B cell (primary cell): ENCODE measurements at regions of chr12 and their contacts with region 1.

Region 1: DNA sequence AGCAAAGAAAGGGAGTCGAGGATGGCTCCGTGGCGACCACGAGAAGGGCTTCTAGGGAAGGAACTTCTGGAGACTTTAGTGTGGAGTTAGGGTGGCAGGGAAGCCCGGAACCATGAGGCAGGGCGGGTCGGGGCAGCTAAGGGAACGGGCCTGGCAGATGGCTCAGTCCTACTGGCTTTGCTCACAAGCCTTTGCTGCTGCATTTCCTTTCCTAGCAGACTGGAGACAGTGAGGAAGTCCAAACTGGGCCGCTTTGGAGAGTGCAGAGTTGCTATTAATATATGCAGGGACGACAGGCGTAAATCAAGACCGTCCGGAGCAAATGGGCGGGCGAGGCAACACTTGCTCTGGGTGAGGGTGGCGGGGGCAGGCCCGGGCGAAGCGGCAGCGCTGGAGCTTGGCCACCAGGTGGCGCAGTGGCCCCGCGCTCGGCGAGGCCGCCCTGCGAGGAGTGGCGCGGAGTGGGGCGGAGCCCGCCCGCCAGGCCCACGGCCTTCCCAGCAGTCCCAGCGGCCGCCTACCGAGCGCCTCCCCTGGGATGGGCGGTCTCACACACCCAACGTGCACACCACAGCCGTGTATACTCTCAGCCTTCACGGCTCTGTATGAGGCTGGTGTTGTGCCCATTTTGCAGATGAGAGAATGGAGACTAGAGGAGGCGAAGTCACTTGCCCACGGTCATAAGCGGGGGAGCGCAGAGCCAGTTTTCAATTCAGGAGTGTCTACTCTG is 24.4 kb upstream of the LRTM2 start:
- DNase-seq: peak; percentile 95
- ATAC-seq: peak; percentile 92
- H3K4me3 ChIP-seq: peak overlapping the region; percentile 64 to 88 (median 67)
- H3K4me3 Mint-ChIP-seq: peak overlapping the region; percentile 98
- H3K27ac ChIP-seq: peak overlapping the region; percentile 67 to 83
- H3K27ac Mint-ChIP-seq: peak overlapping the region; percentile 97
- H3K4me1 ChIP-seq: peaks cover 14 to 37% of the 10 kb centered on the region in 2 donors
- H3K4me1 Mint-ChIP-seq: peaks cover 33% of the 10 kb centered on the region
- H3K27me3 ChIP-seq: no peaks in the 10 kb centered on the region
- H3K27me3 Mint-ChIP-seq: no peaks in the 10 kb centered on the region
- CTCF ChIP-seq: peak; percentile 90

Region 2: DNA sequence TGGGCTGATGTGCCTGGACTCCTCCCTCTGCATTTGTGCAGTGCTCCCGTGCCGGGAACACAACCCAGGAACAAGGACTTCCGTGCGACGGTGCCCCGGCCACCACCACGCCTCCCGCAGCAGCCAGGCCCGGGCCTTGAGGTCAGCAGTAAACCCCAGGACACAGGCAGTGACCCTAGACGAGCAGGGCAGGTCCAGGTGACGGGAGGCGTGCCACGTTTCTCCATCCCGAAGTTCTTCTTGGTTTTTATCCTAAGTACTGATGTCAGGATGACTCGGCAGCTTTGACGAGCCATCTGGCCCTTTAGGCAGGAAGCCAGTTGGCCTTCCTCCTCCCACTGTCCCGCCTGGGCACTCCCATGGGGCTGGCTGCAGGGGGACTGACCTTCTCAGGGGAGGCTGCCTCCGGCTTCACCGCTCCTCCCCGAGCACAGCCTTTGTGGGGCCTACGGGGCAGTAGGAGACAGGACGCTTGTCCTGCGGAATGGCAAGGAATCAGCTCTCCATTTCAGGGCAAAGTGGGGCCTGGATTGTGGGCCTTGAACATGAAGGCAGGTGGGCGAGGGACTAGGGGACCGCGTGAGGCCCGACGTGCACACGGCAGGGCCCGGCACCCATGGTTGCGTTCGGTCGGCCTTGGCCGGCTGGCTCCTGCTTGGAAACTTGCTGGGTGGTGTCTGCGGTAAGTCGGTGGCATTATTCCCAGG is 295.7 kb before region 1 on chr12:
- CTCF ChIA-PET with region 1: no interaction called
- POLR2A ChIA-PET with region 1: no interaction called
- intact Hi-C with region 1: no loop called
- DNase-seq: no peak
- ATAC-seq: no peak
- H3K4me3 ChIP-seq: no peak overlapping the region
- H3K4me3 Mint-ChIP-seq: no peak overlapping the region
- H3K27ac ChIP-seq: no peak overlapping the region
- H3K27ac Mint-ChIP-seq: no peak overlapping the region
- H3K4me1 ChIP-seq: peaks cover 0 to 4% of the 10 kb centered on the region in 2 donors
- H3K4me1 Mint-ChIP-seq: peaks cover 4% of the 10 kb centered on the region
- H3K27me3 ChIP-seq: peaks cover 0 to 3% (median 0%) of the 10 kb centered on the region in 4 experiments
- H3K27me3 Mint-ChIP-seq: peaks cover 26% of the 10 kb centered on the region
- CTCF ChIP-seq: no peak

Region 3: GRCh38 chr12:1594261-1595025 is 201.5 kb before region 1 on chr12 and contains the start of gene FBXL14:
- CTCF ChIA-PET with region 1: no interaction called
- POLR2A ChIA-PET with region 1: no interaction called
- intact Hi-C with region 1: no loop called
- DNase-seq: peak; percentile 95
- ATAC-seq: peak; percentile 65
- H3K4me3 ChIP-seq: peak within 1 kb of the TSS; percentile 59 to 81 (median 73)
- H3K4me3 Mint-ChIP-seq: peak within 1 kb of the TSS; percentile 94
- H3K27ac ChIP-seq: peak within 1 kb of the TSS; percentile 80 to 96
- H3K27ac Mint-ChIP-seq: peak within 1 kb of the TSS; percentile 97
- H3K4me1 ChIP-seq: peaks cover 38 to 41% of the 10 kb centered on the region in 2 donors
- H3K4me1 Mint-ChIP-seq: peaks cover 50% of the 10 kb centered on the region
- H3K27me3 ChIP-seq: no peaks in the 10 kb centered on the region
- H3K27me3 Mint-ChIP-seq: no peaks in the 10 kb centered on the region
- CTCF ChIP-seq: no peak
- total RNA-seq, gene FBXL14: 33.9 and 37.3 TPM in 2 replicates

Region 4: GRCh38 chr12:1644534-1645438 is 151.2 kb before region 1 on chr12:
- CTCF ChIA-PET with region 1: interaction called, 620 read pairs
- POLR2A ChIA-PET with region 1: no interaction called
- intact Hi-C with region 1: no loop called
- DNase-seq: no peak
- ATAC-seq: no peak
- H3K4me3 ChIP-seq: no peak overlapping the region
- H3K4me3 Mint-ChIP-seq: no peak overlapping the region
- H3K27ac ChIP-seq: no peak overlapping the region
- H3K27ac Mint-ChIP-seq: no peak overlapping the region
- H3K4me1 ChIP-seq: peaks cover 0 to 14% of the 10 kb centered on the region in 2 donors
- H3K4me1 Mint-ChIP-seq: peaks cover 11% of the 10 kb centered on the region
- H3K27me3 ChIP-seq: no peaks in the 10 kb centered on the region
- H3K27me3 Mint-ChIP-seq: peaks cover 27% of the 10 kb centered on the region
- CTCF ChIP-seq: no peak

Region 5: DNA sequence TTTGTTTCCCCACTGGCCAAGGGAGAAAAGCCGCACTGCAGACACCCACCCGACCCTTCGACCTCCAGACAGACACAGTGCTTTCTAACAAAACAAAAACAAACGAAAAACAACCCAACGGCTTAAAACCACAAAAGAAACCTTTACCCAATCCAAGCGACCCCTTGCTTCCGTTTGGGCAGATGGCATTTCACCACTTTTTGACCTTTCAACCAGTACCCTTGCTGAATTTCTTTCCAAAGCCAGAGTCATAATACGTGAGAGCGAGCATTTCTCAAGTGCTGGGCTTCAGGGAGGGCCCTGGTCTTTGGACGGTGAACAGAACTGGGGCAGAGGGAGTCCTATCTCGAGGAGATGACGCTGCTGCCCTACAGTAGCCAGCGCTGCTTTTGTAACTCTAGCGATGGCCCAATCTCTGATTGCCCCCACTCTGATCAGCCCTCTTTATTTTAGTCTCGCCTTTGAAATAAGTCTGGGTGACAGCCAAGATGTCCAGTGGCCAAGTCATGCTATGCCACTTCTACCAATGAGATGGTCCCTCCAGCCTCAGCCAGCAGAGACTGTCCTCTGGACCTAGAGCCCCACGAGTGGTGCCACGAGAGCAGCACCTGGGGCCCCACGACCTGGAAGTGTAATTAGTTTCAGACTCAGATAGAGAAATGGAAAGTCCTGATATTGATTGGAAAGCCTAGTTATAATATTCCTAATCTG is 127.0 kb before region 1 on chr12:
- CTCF ChIA-PET with region 1: interaction called, 15 read pairs
- POLR2A ChIA-PET with region 1: no interaction called
- intact Hi-C with region 1: no loop called
- DNase-seq: no peak
- ATAC-seq: no peak
- H3K4me3 ChIP-seq: no peak overlapping the region
- H3K4me3 Mint-ChIP-seq: peak overlapping the region; percentile 30
- H3K27ac ChIP-seq: no peak overlapping the region
- H3K27ac Mint-ChIP-seq: no peak overlapping the region
- H3K4me1 ChIP-seq: peaks cover 10 to 13% of the 10 kb centered on the region in 2 donors
- H3K4me1 Mint-ChIP-seq: peaks cover 18% of the 10 kb centered on the region
- H3K27me3 ChIP-seq: no peaks in the 10 kb centered on the region
- H3K27me3 Mint-ChIP-seq: no peaks in the 10 kb centered on the region
- CTCF ChIP-seq: no peak

Region 6: DNA sequence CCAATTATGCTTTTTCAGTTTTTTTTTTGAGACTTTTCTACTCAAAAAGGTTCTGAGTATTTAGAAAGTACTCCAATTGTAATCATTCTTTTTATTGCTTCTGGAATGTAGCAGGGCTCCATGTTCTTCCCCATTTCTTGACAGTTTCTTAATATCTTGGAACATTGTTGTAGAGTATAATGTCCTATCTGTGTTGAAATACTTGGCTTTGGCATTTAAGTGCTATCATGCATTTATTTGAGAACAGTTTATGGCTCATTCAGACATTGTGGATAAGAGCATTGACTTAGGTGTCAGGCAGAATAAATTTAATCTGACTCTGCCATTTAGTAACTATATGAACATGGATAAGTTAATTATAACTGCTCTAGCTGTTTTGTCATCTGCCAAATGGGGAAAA is 76.8 kb before region 1 on chr12:
- CTCF ChIA-PET with region 1: no interaction called
- POLR2A ChIA-PET with region 1: no interaction called
- intact Hi-C with region 1: no loop called
- DNase-seq: no peak
- ATAC-seq: no peak
- H3K4me3 ChIP-seq: no peak overlapping the region
- H3K4me3 Mint-ChIP-seq: no peak overlapping the region
- H3K27ac ChIP-seq: no peak overlapping the region
- H3K27ac Mint-ChIP-seq: no peak overlapping the region
- H3K4me1 ChIP-seq: peaks cover 3 to 10% of the 10 kb centered on the region in 2 donors
- H3K4me1 Mint-ChIP-seq: peaks cover 39% of the 10 kb centered on the region
- H3K27me3 ChIP-seq: no peaks in the 10 kb centered on the region
- H3K27me3 Mint-ChIP-seq: no peaks in the 10 kb centered on the region
- CTCF ChIP-seq: no peak

Region 7: GRCh38 chr12:1776170-1776948 is 19.6 kb before region 1 on chr12:
- CTCF ChIA-PET with region 1: interaction called, 13 read pairs
- POLR2A ChIA-PET with region 1: no interaction called
- intact Hi-C with region 1: no loop called
- DNase-seq: no peak
- ATAC-seq: no peak
- H3K4me3 ChIP-seq: no peak overlapping the region
- H3K4me3 Mint-ChIP-seq: no peak overlapping the region
- H3K27ac ChIP-seq: no peak overlapping the region
- H3K27ac Mint-ChIP-seq: no peak overlapping the region
- H3K4me1 ChIP-seq: no peaks in the 10 kb centered on the region
- H3K4me1 Mint-ChIP-seq: no peaks in the 10 kb centered on the region
- H3K27me3 ChIP-seq: no peaks in the 10 kb centered on the region
- H3K27me3 Mint-ChIP-seq: no peaks in the 10 kb centered on the region
- CTCF ChIP-seq: no peak

Region 8: DNA sequence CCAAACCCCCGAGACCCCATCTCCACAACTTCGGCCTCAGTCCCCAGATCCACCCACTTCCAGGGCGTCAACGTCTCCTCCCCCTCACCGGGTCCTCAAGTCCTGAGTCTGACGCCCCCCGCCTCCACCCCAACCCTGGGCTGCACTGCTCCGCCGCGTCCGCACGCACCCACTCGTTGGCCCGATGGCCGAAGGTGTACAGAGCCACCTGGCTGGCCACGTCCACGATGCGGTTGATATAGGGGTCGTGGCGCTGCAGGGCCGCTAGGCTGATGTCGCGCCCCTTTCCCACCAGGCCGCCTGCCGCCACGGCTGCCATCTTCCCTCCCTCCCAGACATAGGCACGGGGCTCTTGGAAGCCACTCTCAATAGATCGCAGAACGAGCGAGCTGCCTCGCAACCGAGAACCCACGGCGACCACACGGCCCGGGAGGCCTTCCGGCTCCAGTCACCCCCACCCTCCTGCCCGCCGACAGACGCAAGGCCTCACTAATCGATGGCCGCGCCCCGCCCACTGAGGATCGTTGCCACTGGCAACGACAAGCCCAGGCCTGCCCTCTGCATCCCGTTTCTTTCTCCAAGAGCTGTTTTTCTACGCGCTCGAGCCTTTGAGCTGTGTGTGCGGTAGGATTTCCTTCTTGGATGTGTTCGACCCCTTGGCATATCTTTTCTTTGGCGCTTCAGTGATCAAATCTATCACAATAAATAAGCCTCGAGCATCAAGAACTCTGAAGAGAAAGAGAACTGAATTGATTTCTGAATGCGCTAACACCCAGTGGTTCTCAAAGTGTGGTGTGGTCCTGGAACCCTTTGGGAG is 208.4 kb after region 1 on chr12 and contains the start of gene DCP1B:
- CTCF ChIA-PET with region 1: no interaction called
- POLR2A ChIA-PET with region 1: no interaction called
- intact Hi-C with region 1: loop called (anchors 1 kb)
- DNase-seq: peak; percentile 95
- ATAC-seq: peak; percentile 99
- H3K4me3 ChIP-seq: peak within 1 kb of the TSS; percentile 64 to 92 (median 92)
- H3K4me3 Mint-ChIP-seq: peak within 1 kb of the TSS; percentile 99
- H3K27ac ChIP-seq: peak within 1 kb of the TSS; percentile 81 to 93
- H3K27ac Mint-ChIP-seq: peak within 1 kb of the TSS; percentile 99
- H3K4me1 ChIP-seq: peaks cover 11 to 15% of the 10 kb centered on the region in 2 donors
- H3K4me1 Mint-ChIP-seq: peaks cover 26% of the 10 kb centered on the region
- H3K27me3 ChIP-seq: no peaks in the 10 kb centered on the region
- H3K27me3 Mint-ChIP-seq: no peaks in the 10 kb centered on the region
- CTCF ChIP-seq: no peak
- total RNA-seq, gene DCP1B: 18.0 and 18.1 TPM in 2 replicates

Region 9: DNA sequence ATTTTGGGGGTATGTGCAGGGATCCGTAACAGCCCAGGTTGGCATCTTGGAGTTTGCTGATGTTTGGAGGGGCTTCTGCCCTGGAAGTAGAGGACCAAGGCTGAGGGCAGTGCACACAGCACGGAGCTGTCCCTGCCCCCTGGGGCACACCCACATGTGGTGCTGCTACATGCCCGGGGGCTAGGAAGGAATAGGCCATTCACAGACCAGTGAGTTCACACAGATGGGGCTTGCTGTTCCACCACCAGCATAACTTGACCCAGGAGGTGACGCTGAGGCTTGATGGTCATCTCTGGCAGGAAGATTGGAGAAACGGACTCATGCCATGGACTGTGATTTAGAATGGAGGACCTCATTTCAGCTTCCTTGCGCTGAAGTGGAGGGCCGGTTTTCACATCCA is 767.8 kb after region 1 on chr12:
- CTCF ChIA-PET with region 1: no interaction called
- POLR2A ChIA-PET with region 1: no interaction called
- intact Hi-C with region 1: no loop called
- DNase-seq: no peak
- ATAC-seq: no peak
- H3K4me3 ChIP-seq: no peak overlapping the region
- H3K4me3 Mint-ChIP-seq: no peak overlapping the region
- H3K27ac ChIP-seq: no peak overlapping the region
- H3K27ac Mint-ChIP-seq: no peak overlapping the region
- H3K4me1 ChIP-seq: no peaks in the 10 kb centered on the region
- H3K4me1 Mint-ChIP-seq: peaks cover 2% of the 10 kb centered on the region
- H3K27me3 ChIP-seq: peaks cover 0 to 4% (median 0%) of the 10 kb centered on the region in 4 experiments
- H3K27me3 Mint-ChIP-seq: peaks cover 9% of the 10 kb centered on the region
- CTCF ChIP-seq: no peak